ENCODE measurements at regions of chr18 and their contacts with region 1.

Region 1: GRCh38 chr18:25896178-25896780 is 194.1 kb downstream of the SS18 start:
- DNase-seq: no peak

Region 2: GRCh38 chr18:24878289-24878688 is 1018.0 kb before region 1 on chr18:
- intact Hi-C with region 1: loop called in 1 of 2 experiments (anchors 10 kb)
- DNase-seq: no peak

Region 3: GRCh38 chr18:25805323-25805722 is 91.0 kb before region 1 on chr18:
- intact Hi-C with region 1: no loop called
- DNase-seq: peak; percentile 83

Measured in posterior vena cava (tissue), 2 donors.